H1 (cell line): ENCODE measurements at regions of chr18 and their contacts with region 1.

Region 1: GRCh38 chr18:62982600-62983251 is 267.4 kb downstream of the PHLPP1 start:
- DNase-seq: peak; percentile 33 to 74
- H3K4me3 ChIP-seq: no peak overlapping the region
- H3K27ac ChIP-seq: no peak overlapping the region
- H3K4me1 ChIP-seq: no peaks in the 10 kb centered on the region
- H3K27me3 ChIP-seq: no peaks in the 10 kb centered on the region
- CTCF ChIP-seq: peak; percentile 27 to 82 (median 77)
- EP300 ChIP-seq: no peak
- POLR2A ChIP-seq: no peak
- RAD21 ChIP-seq: peak; percentile 86 to 93

Region 2: GRCh38 chr18:62957885-62958472 is 24.7 kb before region 1 on chr18:
- CTCF ChIA-PET with region 1: interaction called, 11 read pairs
- POLR2A ChIA-PET with region 1: no interaction called
- DNase-seq: peak; percentile 15 to 87
- H3K4me3 ChIP-seq: no peak overlapping the region
- H3K27ac ChIP-seq: no peak overlapping the region
- H3K4me1 ChIP-seq: peaks cover 0 to 6% (median 2%) of the 10 kb centered on the region in 4 experiments; a peak in 3 of 7 replicates
- H3K27me3 ChIP-seq: no peaks in the 10 kb centered on the region
- CTCF ChIP-seq: peak in 2 of 3 experiments; percentile 47 to 55; a peak in 3 of 4 replicates
- EP300 ChIP-seq: no peak
- POLR2A ChIP-seq: no peak
- RAD21 ChIP-seq: peak; percentile 62 to 64